ENCODE measurements at regions of chr13 and their contacts with region 1.

Region 1: GRCh38 chr13:19863323-19864023 is at the start of gene ZMYM5:
- DNase-seq: peak; percentile 99
- H3K4me3 ChIP-seq: peak within 1 kb of the TSS; percentile 69 to 95 (median 86)
- H3K27ac ChIP-seq: peak within 1 kb of the TSS; percentile 96 to 100 (median 99)
- H3K4me1 ChIP-seq: peaks cover 9 to 27% (median 18%) of the 10 kb centered on the region in 4 donors
- H3K27me3 ChIP-seq: no peaks in the 10 kb centered on the region
- CTCF ChIP-seq: peak in 1 of 5 experiments; percentile 23
- EP300 ChIP-seq: no peak
- POLR2A ChIP-seq: peak; percentile 93
- total RNA-seq, gene ZMYM5: 4.9 to 259 (median 14.3) TPM

Region 2: DNA sequence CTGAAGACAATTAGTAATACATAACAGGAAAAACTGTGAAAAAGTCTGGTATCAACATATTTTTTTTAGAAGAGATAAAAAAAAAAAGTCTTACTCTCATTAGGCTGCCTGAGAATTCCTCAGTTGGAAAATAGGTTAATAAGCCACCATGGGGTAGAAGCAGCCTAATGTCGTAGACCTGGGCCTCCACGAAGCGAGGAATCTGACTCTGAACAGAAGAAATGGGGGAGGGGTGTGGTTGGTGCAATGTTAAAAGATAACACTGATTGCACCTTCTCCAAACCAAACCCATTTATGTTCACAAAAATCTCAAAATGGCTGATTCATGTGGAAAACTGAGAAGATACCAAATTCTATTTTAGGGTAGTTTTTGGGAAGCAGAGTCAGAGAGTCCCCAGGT is 167.6 kb before region 1 on chr13:
- in situ Hi-C with region 1: no loop called
- intact Hi-C with region 1: no loop called
- DNase-seq: no peak
- H3K4me3 ChIP-seq: no peak overlapping the region
- H3K27ac ChIP-seq: no peak overlapping the region
- H3K4me1 ChIP-seq: no peaks in the 10 kb centered on the region
- H3K27me3 ChIP-seq: no peaks in the 10 kb centered on the region
- CTCF ChIP-seq: no peak
- EP300 ChIP-seq: no peak
- POLR2A ChIP-seq: no peak

Region 3: GRCh38 chr13:19782049-19782726 is 81.3 kb before region 1 on chr13:
- in situ Hi-C with region 1: no loop called
- intact Hi-C with region 1: loop called (anchors 1 kb)
- DNase-seq: peak; percentile 61
- H3K4me3 ChIP-seq: peak overlapping the region; percentile 76 to 99 (median 93)
- H3K27ac ChIP-seq: peak overlapping the region; percentile 94 to 99 (median 96)
- H3K4me1 ChIP-seq: peaks cover 0 to 11% (median 6%) of the 10 kb centered on the region in 4 donors
- H3K27me3 ChIP-seq: no peaks in the 10 kb centered on the region
- CTCF ChIP-seq: no peak
- EP300 ChIP-seq: no peak
- POLR2A ChIP-seq: no peak

Region 4: DNA sequence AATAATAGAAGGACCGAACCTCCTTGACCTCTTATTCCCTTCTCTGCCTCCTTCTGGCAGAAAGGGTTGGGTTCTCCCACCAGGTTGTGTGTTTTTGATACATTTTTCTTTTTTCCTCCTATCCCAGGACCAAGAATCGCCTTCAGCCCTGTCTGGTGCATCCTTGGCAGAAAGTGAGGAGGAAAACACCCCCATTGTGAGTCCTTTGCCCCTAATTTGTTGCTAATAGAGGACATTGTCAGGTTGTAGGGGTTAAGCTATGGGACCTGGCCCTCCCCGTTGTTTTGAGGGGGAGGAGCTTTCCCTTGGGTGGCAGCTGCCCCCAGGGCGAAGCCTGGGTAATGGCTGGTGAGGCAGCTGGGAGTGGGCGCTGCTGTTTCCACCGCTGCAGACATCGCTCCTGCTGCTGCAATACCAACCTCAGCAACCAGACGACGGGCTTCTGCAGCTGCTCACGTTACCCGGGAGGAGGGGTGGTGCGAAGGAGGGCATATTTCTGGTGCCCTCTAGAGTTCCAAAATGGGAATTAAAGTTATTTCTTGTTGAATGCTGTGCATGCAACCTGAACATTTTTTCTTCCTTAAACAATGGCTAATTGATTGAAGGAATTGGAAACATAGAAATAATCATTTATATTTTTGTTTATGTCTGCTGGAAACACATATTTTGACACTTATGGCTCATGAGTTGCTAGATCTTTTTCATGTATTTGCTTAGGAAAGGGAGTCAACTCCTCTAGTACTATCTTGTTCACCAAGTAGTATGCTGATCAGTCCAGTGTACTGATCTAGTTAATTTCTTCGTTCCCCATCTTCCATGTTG is 96.6 kb after region 1 on chr13:
- in situ Hi-C with region 1: no loop called
- intact Hi-C with region 1: loop called (anchors 5 kb)
- DNase-seq: peak; percentile 88
- H3K4me3 ChIP-seq: peak overlapping the region; percentile 88 to 99 (median 96)
- H3K27ac ChIP-seq: peak overlapping the region; percentile 99 to 100 (median 100)
- H3K4me1 ChIP-seq: peaks cover 20 to 61% (median 26%) of the 10 kb centered on the region in 4 donors
- H3K27me3 ChIP-seq: no peaks in the 10 kb centered on the region
- CTCF ChIP-seq: peak; percentile 87 to 95 (median 93)
- EP300 ChIP-seq: no peak
- POLR2A ChIP-seq: peak; percentile 51